ENCODE measurements at regions of chr3 and their contacts with region 1.

Region 1: DNA sequence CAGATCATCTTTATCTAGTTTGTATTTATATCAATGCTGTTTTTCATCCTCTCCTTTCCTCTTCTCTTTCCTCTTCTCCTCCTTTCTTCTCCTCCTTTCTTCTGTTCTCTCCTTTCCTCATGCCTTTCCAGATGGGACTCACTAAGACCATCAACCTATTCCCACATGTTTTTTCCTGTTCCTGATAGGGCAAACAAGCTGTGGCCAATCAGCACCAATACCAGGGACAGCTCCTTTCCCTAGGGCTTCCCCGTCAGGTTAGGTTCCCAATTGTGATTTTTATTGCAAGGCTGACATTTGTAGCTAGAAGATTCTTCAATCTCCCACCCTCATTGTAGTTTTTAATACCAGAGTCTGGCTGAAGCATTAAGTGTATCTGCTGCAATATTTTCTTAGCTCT is 76.3 kb upstream of the COL8A1 start:
- DNase-seq: no peak
- ATAC-seq: no peak
- H3K4me3 ChIP-seq: no peak overlapping the region
- H3K27ac ChIP-seq: no peak overlapping the region
- H3K4me1 ChIP-seq: no peaks in the 10 kb centered on the region
- H3K27me3 ChIP-seq: no peaks in the 10 kb centered on the region
- CTCF ChIP-seq: no peak

Region 2: GRCh38 chr3:97778152-97778551 is 1784.0 kb before region 1 on chr3:
- intact Hi-C with region 1: loop called in 1 of 3 experiments (anchors 10 kb)
- DNase-seq: no peak
- ATAC-seq: no peak
- H3K4me3 ChIP-seq: no peak overlapping the region
- H3K27ac ChIP-seq: no peak overlapping the region
- H3K4me1 ChIP-seq: peaks cover 0 to 5% (median 0%) of the 10 kb centered on the region in 3 donors
- H3K27me3 ChIP-seq: no peaks in the 10 kb centered on the region
- CTCF ChIP-seq: no peak

Measured in pancreas (tissue), 10 donors.